Activated CD4-positive, alpha-beta memory T cell treated with anti-CD3 and anti-CD28 coated beads, Interleukin-2, amount 10 ng/mL, durations not matched to agents 7 days and 5 days (primary cell): ENCODE measurements at regions of chr16 and their contacts with region 1.

Region 1: GRCh38 chr16:70298988-70299938 is at the start of gene DDX19B:
- DNase-seq: peak; percentile 75
- H3K4me3 Mint-ChIP-seq: peak within 1 kb of the TSS; percentile 81
- H3K27ac Mint-ChIP-seq: peak within 1 kb of the TSS; percentile 88
- H3K4me1 Mint-ChIP-seq: peaks cover 36% of the 10 kb centered on the region
- H3K27me3 Mint-ChIP-seq: no peaks in the 10 kb centered on the region
- total RNA-seq, gene DDX19B: 33.2 to 35.8 TPM

Region 2: DNA sequence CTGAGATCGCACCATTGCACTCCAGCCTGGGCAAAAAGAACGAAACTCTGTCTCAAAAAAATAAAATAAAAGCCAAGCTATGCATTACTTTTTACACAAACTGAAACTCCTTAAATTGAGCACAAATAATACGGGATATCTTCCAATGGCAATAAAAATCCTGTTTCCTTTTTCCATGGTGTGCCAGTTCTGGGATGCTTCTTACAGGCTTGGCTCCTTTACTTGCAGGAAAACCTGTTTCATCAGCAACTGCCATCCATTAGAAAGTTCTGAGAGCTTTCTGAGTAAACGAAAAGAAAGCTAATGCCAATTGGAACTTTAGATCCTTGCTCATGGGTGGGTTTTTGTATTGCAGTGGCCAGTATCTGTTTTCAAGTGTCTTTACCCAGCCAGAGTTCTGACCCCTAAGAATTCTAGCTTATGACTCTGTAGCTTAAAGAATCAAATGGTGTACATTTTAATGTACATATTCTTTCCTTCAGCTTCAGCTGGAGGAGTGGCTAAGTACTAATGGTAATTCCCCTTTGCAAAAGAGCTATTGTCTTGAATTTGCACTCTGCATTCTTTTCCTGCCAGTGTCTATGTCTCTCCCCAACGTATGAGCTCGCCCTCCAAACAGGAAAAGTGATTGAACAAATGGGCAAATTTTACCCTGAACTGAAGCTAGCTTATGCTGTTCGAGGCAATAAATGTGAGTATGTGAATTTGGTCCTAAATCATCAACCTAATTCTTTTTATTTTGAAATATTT is 25.9 kb after region 1 on chr16:
- CTCF ChIA-PET with region 1: interaction called, 4 read pairs
- POLR2A ChIA-PET with region 1: interaction called, 12 read pairs
- DNase-seq: no peak
- H3K4me3 Mint-ChIP-seq: no peak overlapping the region
- H3K27ac Mint-ChIP-seq: no peak overlapping the region
- H3K4me1 Mint-ChIP-seq: no peaks in the 10 kb centered on the region
- H3K27me3 Mint-ChIP-seq: no peaks in the 10 kb centered on the region

Region 3: GRCh38 chr16:70337814-70338213 is 38.6 kb after region 1 on chr16:
- CTCF ChIA-PET with region 1: no interaction called
- POLR2A ChIA-PET with region 1: no interaction called
- DNase-seq: no peak
- H3K4me3 Mint-ChIP-seq: no peak overlapping the region
- H3K27ac Mint-ChIP-seq: no peak overlapping the region
- H3K4me1 Mint-ChIP-seq: no peaks in the 10 kb centered on the region
- H3K27me3 Mint-ChIP-seq: no peaks in the 10 kb centered on the region

Region 4: GRCh38 chr16:70610273-70611223 is 311.3 kb after region 1 on chr16:
- CTCF ChIA-PET with region 1: no interaction called
- POLR2A ChIA-PET with region 1: no interaction called
- DNase-seq: no peak
- H3K4me3 Mint-ChIP-seq: no peak overlapping the region
- H3K27ac Mint-ChIP-seq: no peak overlapping the region
- H3K4me1 Mint-ChIP-seq: no peaks in the 10 kb centered on the region
- H3K27me3 Mint-ChIP-seq: peaks cover 2% of the 10 kb centered on the region